ENCODE measurements at regions of chr2 and their contacts with region 1.

Region 1: GRCh38 chr2:201363857-201364560 is 6.9 kb upstream of the FLACC1 start:
- DNase-seq: peak in 4 of 5 donors; percentile 49 to 59 (median 58)
- H3K4me3 ChIP-seq: no peak overlapping the region
- H3K4me3 Mint-ChIP-seq: peak overlapping the region in 3 of 8 donors; percentile 24 to 51 (median 32)
- H3K27ac ChIP-seq: no peak overlapping the region
- H3K27ac Mint-ChIP-seq: peak overlapping the region in 4 of 7 donors; percentile 38 to 84 (median 70)
- H3K4me1 ChIP-seq: peaks cover 31% of the 10 kb centered on the region
- H3K4me1 Mint-ChIP-seq: peaks cover 20 to 33% (median 27%) of the 10 kb centered on the region in 4 donors
- H3K27me3 ChIP-seq: no peaks in the 10 kb centered on the region
- H3K27me3 Mint-ChIP-seq: no peaks in the 10 kb centered on the region

Region 2: GRCh38 chr2:201263779-201264178 is 100.2 kb before region 1 on chr2:
- CTCF ChIA-PET with region 1: interaction called, 19 read pairs
- POLR2A ChIA-PET with region 1: interaction called, 27 read pairs
- intact Hi-C with region 1: loop called (anchors 1 kb)
- DNase-seq: no peak
- H3K4me3 ChIP-seq: peak overlapping the region; percentile 6 to 49
- H3K4me3 Mint-ChIP-seq: peak overlapping the region; percentile 75 to 91 (median 87)
- H3K27ac ChIP-seq: peak overlapping the region; percentile 55
- H3K27ac Mint-ChIP-seq: peak overlapping the region; percentile 57 to 95 (median 84)
- H3K4me1 ChIP-seq: peaks cover 81% of the 10 kb centered on the region
- H3K4me1 Mint-ChIP-seq: peaks cover 50 to 84% (median 65%) of the 10 kb centered on the region in 4 donors
- H3K27me3 ChIP-seq: no peaks in the 10 kb centered on the region
- H3K27me3 Mint-ChIP-seq: no peaks in the 10 kb centered on the region

Region 3: DNA sequence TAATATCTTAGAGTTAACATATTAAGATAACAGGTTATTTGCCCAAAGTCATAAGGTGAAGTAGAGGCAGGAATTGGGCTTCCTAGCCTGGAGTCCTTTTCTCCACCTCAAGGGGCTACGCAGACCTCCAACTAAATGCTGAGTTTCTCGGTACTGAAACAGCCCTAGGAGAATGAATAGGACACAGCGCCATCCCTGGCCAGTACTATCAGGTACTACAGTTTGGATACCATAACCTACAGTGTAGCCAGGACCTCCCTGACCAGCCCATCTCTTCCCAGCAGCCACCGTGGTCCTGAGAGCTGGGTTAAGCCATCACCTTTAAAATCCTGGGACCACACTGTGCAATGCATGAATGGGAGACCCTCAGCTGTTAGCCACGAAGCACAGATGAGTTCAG is 88.0 kb before region 1 on chr2:
- CTCF ChIA-PET with region 1: interaction called, 7 read pairs
- POLR2A ChIA-PET with region 1: no interaction called
- intact Hi-C with region 1: loop called (anchors 5 kb)
- DNase-seq: no peak
- H3K4me3 ChIP-seq: no peak overlapping the region
- H3K4me3 Mint-ChIP-seq: no peak overlapping the region
- H3K27ac ChIP-seq: no peak overlapping the region
- H3K27ac Mint-ChIP-seq: peak overlapping the region in 5 of 7 donors; percentile 28 to 84 (median 63)
- H3K4me1 ChIP-seq: peaks cover 34% of the 10 kb centered on the region
- H3K4me1 Mint-ChIP-seq: peaks cover 36 to 65% (median 46%) of the 10 kb centered on the region in 4 donors
- H3K27me3 ChIP-seq: no peaks in the 10 kb centered on the region
- H3K27me3 Mint-ChIP-seq: no peaks in the 10 kb centered on the region

Region 4: GRCh38 chr2:201350879-201351278 is 13.1 kb before region 1 on chr2:
- CTCF ChIA-PET with region 1: interaction called, 17 read pairs
- POLR2A ChIA-PET with region 1: no interaction called
- intact Hi-C with region 1: no loop called
- DNase-seq: no peak
- H3K4me3 ChIP-seq: no peak overlapping the region
- H3K4me3 Mint-ChIP-seq: no peak overlapping the region
- H3K27ac ChIP-seq: no peak overlapping the region
- H3K27ac Mint-ChIP-seq: no peak overlapping the region
- H3K4me1 ChIP-seq: no peaks in the 10 kb centered on the region
- H3K4me1 Mint-ChIP-seq: peaks cover 0 to 5% (median under 1%) of the 10 kb centered on the region in 4 donors
- H3K27me3 ChIP-seq: no peaks in the 10 kb centered on the region
- H3K27me3 Mint-ChIP-seq: no peaks in the 10 kb centered on the region

Region 5: GRCh38 chr2:201377218-201377617 is 13.2 kb after region 1 on chr2:
- CTCF ChIA-PET with region 1: interaction called, 13 read pairs
- POLR2A ChIA-PET with region 1: no interaction called
- intact Hi-C with region 1: no loop called
- DNase-seq: no peak
- H3K4me3 ChIP-seq: no peak overlapping the region
- H3K4me3 Mint-ChIP-seq: no peak overlapping the region
- H3K27ac ChIP-seq: no peak overlapping the region
- H3K27ac Mint-ChIP-seq: no peak overlapping the region
- H3K4me1 ChIP-seq: no peaks in the 10 kb centered on the region
- H3K4me1 Mint-ChIP-seq: peaks cover 1 to 9% (median 5%) of the 10 kb centered on the region in 4 donors
- H3K27me3 ChIP-seq: no peaks in the 10 kb centered on the region
- H3K27me3 Mint-ChIP-seq: no peaks in the 10 kb centered on the region

Region 6: GRCh38 chr2:201444746-201445465 is 80.9 kb after region 1 on chr2:
- CTCF ChIA-PET with region 1: interaction called, 13 read pairs
- POLR2A ChIA-PET with region 1: no interaction called
- intact Hi-C with region 1: no loop called
- DNase-seq: no peak
- H3K4me3 ChIP-seq: no peak overlapping the region
- H3K4me3 Mint-ChIP-seq: no peak overlapping the region
- H3K27ac ChIP-seq: no peak overlapping the region
- H3K27ac Mint-ChIP-seq: no peak overlapping the region
- H3K4me1 ChIP-seq: peaks cover 58% of the 10 kb centered on the region
- H3K4me1 Mint-ChIP-seq: peaks cover 42 to 65% (median 54%) of the 10 kb centered on the region in 4 donors
- H3K27me3 ChIP-seq: no peaks in the 10 kb centered on the region
- H3K27me3 Mint-ChIP-seq: no peaks in the 10 kb centered on the region